Activated CD8-positive, alpha-beta T cell treated with anti-CD3 and anti-CD28 coated beads, Interleukin-2, amount 10 ng/mL, durations not matched to agents 7 days and 5 days (primary cell): ENCODE measurements at regions of chr2 and their contacts with region 1.

Region 1: DNA sequence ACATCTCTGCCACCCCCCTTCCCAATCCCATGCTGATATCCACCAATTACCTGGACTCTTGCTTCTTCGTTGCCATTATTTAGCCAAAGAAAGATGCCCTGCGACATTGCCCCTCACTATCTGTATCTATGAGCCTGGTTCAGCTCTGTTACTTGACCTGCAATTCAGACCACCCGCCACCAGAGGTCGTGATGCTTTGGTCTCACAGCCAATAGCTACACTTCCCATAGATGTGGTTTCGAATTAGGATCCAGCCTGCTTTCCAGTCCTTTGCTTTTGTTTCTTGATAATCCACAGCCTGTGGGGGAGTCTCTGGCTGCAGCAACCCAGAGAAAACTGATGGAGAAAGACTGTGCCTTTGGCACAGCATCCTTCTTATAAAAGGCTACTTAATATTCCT is 239.4 kb downstream of the KLHL29 start:
- DNase-seq: peak; percentile 38
- ATAC-seq: no peak
- H3K4me3 Mint-ChIP-seq: no peak overlapping the region
- H3K27ac Mint-ChIP-seq: no peak overlapping the region
- H3K4me1 Mint-ChIP-seq: no peaks in the 10 kb centered on the region
- H3K27me3 Mint-ChIP-seq: no peaks in the 10 kb centered on the region

Region 2: GRCh38 chr2:23636426-23636825 is 12.0 kb after region 1 on chr2:
- CTCF ChIA-PET with region 1: interaction called, 12 read pairs
- POLR2A ChIA-PET with region 1: no interaction called
- DNase-seq: no peak
- ATAC-seq: no peak
- H3K4me3 Mint-ChIP-seq: no peak overlapping the region
- H3K27ac Mint-ChIP-seq: no peak overlapping the region
- H3K4me1 Mint-ChIP-seq: no peaks in the 10 kb centered on the region
- H3K27me3 Mint-ChIP-seq: no peaks in the 10 kb centered on the region